ENCODE measurements at regions of chr14 and their contacts with region 1.

Region 1: GRCh38 chr14:66495218-66496098 is 9.3 kb downstream of the CCDC196 start:
- DNase-seq: no peak

Region 2: DNA sequence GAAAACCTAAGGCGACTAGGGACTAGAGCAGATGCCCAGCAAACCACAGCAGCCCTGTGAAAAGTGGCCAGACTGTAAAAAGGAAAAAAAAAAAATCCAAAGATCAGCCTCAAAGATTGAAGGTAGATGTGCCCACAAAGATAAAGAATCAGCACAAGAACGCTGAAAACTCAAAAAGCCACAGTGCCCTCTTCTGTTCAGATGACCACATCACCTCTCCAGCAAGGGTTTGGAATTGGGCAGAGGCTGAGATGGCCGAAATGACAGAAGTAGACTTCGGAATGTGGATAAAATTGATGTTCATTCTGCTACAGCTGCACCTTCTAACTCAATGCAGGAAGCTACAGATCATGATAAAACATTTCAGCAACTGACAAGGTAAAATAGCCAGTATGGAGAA is 166.9 kb after region 1 on chr14:
- intact Hi-C with region 1: loop called (anchors 5 kb)
- DNase-seq: no peak

Region 3: GRCh38 chr14:66696326-66696725 is 200.9 kb after region 1 on chr14:
- intact Hi-C with region 1: no loop called
- DNase-seq: no peak

Region 4: DNA sequence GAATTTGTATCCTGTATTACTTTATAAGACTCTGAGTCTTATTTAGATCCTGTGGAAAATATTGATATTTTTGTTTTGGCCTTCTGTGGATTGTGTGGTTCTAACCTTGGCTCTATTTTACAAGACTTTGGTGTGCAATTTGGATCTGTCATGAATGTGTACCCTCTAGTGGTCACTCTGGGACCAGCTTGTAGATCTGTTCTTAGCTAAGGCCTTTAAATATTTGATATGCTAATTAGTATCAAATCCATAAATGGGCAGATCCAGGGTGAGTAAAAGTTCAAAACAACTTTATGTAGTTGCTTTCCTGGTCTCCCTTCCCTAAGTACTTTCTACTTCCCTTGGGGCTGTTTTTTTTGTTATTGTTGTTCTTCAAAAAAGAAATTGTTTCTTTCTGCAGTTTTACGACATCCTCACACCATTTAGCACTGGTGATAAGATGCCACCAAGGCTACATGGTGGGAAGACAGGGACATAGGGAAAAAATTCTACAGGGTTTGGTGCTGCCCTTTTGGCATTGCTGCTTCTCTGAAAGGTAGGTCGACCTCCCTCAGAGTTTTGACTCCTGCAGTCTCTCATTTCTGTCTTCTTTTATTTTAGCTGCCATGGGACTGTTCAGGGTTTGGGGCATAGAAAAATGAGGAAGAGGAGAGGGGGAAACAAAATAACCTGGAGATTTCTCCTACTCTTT is 251.0 kb after region 1 on chr14:
- intact Hi-C with region 1: loop called (anchors 10 kb)
- DNase-seq: no peak